Activated B cell treated with CpG ODN at 0.5 μM for 24 hours (primary cell): ENCODE measurements at regions of chr11 and their contacts with region 1.

Region 1: DNA sequence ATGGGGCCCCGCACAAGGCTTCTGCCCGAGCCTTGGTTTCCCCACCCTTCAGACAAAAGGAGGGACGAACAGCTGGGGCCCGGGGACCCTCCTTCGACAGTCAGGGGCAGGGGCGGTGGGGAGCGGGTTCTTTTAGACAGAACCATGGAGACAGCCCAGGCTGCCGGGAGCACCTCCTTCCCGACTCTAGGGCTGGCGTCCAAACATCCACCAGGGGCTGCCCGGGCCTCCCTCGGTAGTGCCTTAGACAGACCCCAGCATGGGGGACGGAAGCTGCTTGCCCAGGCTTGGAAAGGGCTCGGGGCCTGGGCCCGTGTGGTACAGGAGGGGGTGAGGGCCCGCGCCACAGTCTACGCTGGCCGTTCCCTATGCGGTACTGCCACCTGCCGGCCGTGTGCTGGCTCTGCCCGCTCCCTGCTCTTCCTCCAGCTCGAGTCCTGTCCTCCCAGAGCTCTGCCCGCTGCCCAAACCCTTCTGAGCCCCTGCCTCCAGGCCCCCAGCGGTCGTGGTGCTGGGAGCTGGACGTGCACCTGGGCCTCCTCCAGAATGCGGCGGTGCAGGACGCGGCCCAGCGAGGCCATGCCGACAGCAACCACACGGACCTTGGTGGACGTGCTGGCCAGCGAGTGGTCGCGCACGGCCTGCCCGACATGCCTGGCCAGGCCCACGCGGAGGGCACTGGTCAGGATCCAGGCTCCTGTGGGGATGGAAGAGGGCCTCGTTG is 20.1 kb downstream of the TSSC4 start:
- DNase-seq: peak; percentile 69
- ATAC-seq: peak; percentile 97
- H3K4me3 Mint-ChIP-seq: no peak overlapping the region
- H3K27ac Mint-ChIP-seq: no peak overlapping the region
- H3K4me1 Mint-ChIP-seq: peaks cover 6% of the 10 kb centered on the region
- H3K27me3 Mint-ChIP-seq: no peaks in the 10 kb centered on the region
- CTCF ChIP-seq: peak; percentile 32

Region 2: DNA sequence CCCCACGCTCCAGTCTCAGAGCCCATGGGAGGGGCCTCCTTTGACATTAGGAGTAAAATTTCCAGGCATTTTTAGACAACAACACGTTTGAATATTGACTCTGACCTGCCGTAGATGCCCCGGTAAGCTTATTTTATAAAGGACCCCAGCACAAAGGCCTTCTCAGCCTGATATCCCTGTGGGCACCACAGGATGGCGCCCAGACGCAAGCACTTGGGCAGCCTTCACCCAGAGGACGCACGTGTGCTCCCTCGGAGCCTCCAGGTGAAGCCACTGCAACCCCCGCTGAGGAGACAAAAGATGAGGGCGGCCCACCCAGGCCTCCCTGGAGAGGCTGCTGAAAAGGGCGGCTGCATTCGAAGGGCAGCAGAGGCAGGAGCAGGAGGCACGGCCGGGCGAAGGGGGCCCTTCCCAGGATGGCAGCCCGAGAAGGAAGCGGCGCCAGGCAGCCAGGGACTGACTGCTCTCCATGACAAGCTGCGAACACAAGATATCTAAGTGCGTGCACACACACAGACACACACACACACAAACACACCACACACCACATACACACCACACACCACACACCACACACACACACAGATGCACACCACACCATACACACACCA is 233.9 kb before region 1 on chr11:
- CTCF ChIA-PET with region 1: interaction called, 47 read pairs
- POLR2A ChIA-PET with region 1: no interaction called
- intact Hi-C with region 1: loop called (anchors 1 kb)
- DNase-seq: no peak
- ATAC-seq: peak; percentile 79
- H3K4me3 Mint-ChIP-seq: no peak overlapping the region
- H3K27ac Mint-ChIP-seq: no peak overlapping the region
- H3K4me1 Mint-ChIP-seq: peaks cover 10% of the 10 kb centered on the region
- H3K27me3 Mint-ChIP-seq: peaks cover 7% of the 10 kb centered on the region
- CTCF ChIP-seq: no peak

Region 3: DNA sequence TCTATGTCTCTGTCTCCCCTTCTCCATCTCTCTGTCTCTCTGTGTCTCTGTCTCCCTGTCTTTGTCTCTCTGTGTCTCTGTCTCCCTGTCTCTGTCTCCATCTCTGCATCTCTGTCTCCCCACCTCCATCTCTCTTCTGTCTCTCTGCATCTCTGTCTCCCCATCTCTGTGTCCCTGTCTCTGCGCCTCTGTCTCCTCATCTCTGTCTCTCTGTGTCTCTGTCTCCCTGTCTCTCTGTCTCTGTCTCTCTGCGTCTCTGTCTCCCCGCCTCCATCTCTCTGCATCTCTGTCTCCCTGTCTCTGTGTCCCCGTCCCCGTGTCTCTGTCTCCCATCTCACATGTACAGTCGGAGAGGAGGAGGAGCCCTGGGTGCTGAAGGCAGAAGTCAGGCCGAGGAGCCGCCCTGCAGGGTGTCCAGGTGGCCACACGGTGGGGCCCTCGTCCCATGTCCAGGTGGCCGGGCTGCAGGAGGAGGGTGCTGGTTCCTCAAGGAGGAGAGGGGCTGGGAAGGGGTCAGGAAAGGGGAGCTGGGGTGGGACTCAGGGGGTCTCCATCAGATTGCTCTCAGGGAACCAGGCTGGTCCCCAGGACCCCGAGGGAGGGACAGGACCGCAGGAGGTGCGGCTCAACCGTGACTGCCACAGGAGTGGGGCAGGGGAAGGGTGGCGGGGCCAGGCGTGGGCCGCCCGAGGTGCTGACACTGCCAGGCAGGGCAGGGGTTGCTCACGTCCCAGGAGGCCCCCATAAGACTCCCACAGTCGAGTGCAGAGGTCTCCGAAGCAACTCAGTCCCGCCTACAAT is 223.5 kb before region 1 on chr11:
- CTCF ChIA-PET with region 1: interaction called, 47 read pairs
- POLR2A ChIA-PET with region 1: no interaction called
- intact Hi-C with region 1: loop called (anchors 1 kb)
- DNase-seq: peak; percentile 61
- ATAC-seq: peak; percentile 97
- H3K4me3 Mint-ChIP-seq: no peak overlapping the region
- H3K27ac Mint-ChIP-seq: peak overlapping the region; percentile 9
- H3K4me1 Mint-ChIP-seq: peaks cover 6% of the 10 kb centered on the region
- H3K27me3 Mint-ChIP-seq: peaks cover 10% of the 10 kb centered on the region
- CTCF ChIP-seq: peak; percentile 31

Region 4: GRCh38 chr11:2342981-2343380 is 77.7 kb before region 1 on chr11:
- CTCF ChIA-PET with region 1: interaction called, 11 read pairs
- POLR2A ChIA-PET with region 1: no interaction called
- intact Hi-C with region 1: loop called (anchors 1 kb)
- DNase-seq: no peak
- ATAC-seq: no peak
- H3K4me3 Mint-ChIP-seq: no peak overlapping the region
- H3K27ac Mint-ChIP-seq: no peak overlapping the region
- H3K4me1 Mint-ChIP-seq: peaks cover 4% of the 10 kb centered on the region
- H3K27me3 Mint-ChIP-seq: no peaks in the 10 kb centered on the region
- CTCF ChIP-seq: no peak

Region 5: GRCh38 chr11:2674658-2675131 is 254.0 kb after region 1 on chr11:
- CTCF ChIA-PET with region 1: no interaction called
- POLR2A ChIA-PET with region 1: no interaction called
- intact Hi-C with region 1: no loop called
- DNase-seq: no peak
- ATAC-seq: no peak
- H3K4me3 Mint-ChIP-seq: no peak overlapping the region
- H3K27ac Mint-ChIP-seq: no peak overlapping the region
- H3K4me1 Mint-ChIP-seq: peaks cover 17% of the 10 kb centered on the region
- H3K27me3 Mint-ChIP-seq: no peaks in the 10 kb centered on the region
- CTCF ChIP-seq: no peak